ENCODE measurements at regions of chr17 and their contacts with region 1.

Region 1: DNA sequence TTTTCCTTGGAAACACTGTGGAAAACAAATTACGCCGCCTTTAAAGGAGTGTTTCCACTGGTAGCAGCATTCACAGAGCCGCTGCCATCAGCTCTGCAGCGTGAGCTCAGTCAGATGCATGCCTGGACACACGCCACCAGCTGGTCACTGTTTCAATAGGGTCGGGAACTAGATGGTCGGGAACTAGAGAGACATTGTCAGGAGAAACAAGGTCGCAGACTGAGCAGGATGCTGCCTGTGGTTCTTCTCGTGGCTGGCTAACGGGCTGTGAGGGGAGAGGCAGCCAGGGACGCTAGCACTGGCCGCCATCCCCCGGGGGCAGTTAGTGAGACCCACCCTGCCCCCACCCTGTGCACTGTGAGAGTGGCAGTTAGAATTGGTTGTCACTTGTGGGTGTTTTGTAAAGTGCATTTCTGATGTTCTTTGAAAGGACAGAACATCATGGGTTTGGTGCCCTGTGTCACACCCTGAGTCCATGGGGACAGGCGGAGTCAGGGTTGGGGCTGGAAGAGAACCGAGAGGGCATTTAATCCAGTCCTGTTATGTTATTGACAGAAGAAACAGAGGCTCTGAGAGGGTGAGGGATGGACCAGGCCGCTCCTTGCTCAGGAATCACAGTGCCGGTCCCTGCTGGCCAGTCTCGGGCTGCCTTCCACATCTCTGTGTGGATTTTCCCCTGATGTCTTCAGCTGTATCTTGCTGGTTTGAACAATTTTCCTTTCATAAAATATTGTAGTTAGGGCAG is 86.3 kb downstream of the SPECC1 start:
- DNase-seq: peak in 1 of 2 donors; percentile 89
- H3K4me3 ChIP-seq: peak overlapping the region in 1 of 2 donors; percentile 36
- H3K27ac ChIP-seq: peak overlapping the region; percentile 90 to 97
- H3K4me1 ChIP-seq: peaks cover 15 to 47% of the 10 kb centered on the region in 2 donors
- H3K27me3 ChIP-seq: no peaks in the 10 kb centered on the region
- CTCF ChIP-seq: peak in 2 of 3 experiments; percentile 34 to 40

Region 2: GRCh38 chr17:20009302-20010098 is 86.0 kb before region 1 on chr17 and contains the start of gene SPECC1:
- intact Hi-C with region 1: loop called (anchors 1 kb)
- DNase-seq: peak; percentile 50 to 93
- H3K4me3 ChIP-seq: peak within 1 kb of the TSS; percentile 74 to 85
- H3K27ac ChIP-seq: peak within 1 kb of the TSS; percentile 85 to 91
- H3K4me1 ChIP-seq: no peaks in the 10 kb centered on the region
- H3K27me3 ChIP-seq: no peaks in the 10 kb centered on the region
- CTCF ChIP-seq: peak in 1 of 3 experiments; percentile 99
- total RNA-seq, gene SPECC1: 76.4 TPM

Region 3: GRCh38 chr17:20028443-20028842 is 67.1 kb before region 1 on chr17:
- intact Hi-C with region 1: loop called (anchors 2 kb)
- DNase-seq: no peak
- H3K4me3 ChIP-seq: no peak overlapping the region
- H3K27ac ChIP-seq: peak overlapping the region in 1 of 2 donors; percentile 47
- H3K4me1 ChIP-seq: peaks cover 0 to 5% of the 10 kb centered on the region in 2 donors
- H3K27me3 ChIP-seq: no peaks in the 10 kb centered on the region
- CTCF ChIP-seq: no peak

Region 4: GRCh38 chr17:20063665-20064648 is 31.6 kb before region 1 on chr17:
- intact Hi-C with region 1: loop called (anchors 1 kb)
- DNase-seq: peak; percentile 66 to 96
- H3K4me3 ChIP-seq: peak overlapping the region in 1 of 2 donors; percentile 39
- H3K27ac ChIP-seq: peak overlapping the region; percentile 77 to 91
- H3K4me1 ChIP-seq: peaks cover 16 to 39% of the 10 kb centered on the region in 2 donors
- H3K27me3 ChIP-seq: no peaks in the 10 kb centered on the region
- CTCF ChIP-seq: no peak

Region 5: DNA sequence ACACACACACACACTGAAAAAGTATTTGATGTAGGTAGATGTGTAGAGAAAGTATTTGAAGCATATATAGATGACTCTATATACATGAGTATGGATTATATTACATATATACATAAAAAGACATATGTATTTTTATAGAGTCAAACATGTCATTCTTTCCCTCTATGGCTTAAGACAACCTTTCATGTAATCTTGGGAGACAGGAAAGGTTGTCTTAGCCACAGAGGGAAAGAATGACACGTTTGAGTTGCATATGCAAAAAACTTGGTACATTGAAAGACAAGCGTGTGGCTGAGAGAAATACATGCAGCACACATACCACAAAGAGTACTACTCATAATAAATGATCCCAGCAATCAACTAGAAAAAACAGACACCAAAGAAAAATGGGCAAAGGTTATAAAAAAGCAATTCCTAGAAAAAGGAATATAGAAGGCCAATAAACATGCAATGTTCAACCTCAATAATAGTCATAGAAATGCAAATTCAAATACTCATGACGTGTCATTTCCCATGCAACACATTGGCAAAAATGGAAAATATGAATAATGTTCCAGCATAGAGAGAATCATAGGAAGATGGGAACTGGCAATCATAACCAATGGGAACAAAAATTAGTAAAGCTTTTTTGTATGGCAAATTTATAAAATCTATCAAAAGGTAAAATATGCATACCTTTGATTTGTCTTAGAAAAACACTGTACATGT is 17.4 kb before region 1 on chr17:
- intact Hi-C with region 1: loop called (anchors 2 kb)
- DNase-seq: no peak
- H3K4me3 ChIP-seq: no peak overlapping the region
- H3K27ac ChIP-seq: peak overlapping the region in 1 of 2 donors; percentile 82
- H3K4me1 ChIP-seq: peaks cover 0 to 31% of the 10 kb centered on the region in 2 donors
- H3K27me3 ChIP-seq: no peaks in the 10 kb centered on the region
- CTCF ChIP-seq: no peak

Region 6: GRCh38 chr17:20111538-20111937 is 16.0 kb after region 1 on chr17:
- intact Hi-C with region 1: loop called (anchors 2 kb)
- DNase-seq: no peak
- H3K4me3 ChIP-seq: no peak overlapping the region
- H3K27ac ChIP-seq: no peak overlapping the region
- H3K4me1 ChIP-seq: no peaks in the 10 kb centered on the region
- H3K27me3 ChIP-seq: no peaks in the 10 kb centered on the region
- CTCF ChIP-seq: no peak

Region 7: DNA sequence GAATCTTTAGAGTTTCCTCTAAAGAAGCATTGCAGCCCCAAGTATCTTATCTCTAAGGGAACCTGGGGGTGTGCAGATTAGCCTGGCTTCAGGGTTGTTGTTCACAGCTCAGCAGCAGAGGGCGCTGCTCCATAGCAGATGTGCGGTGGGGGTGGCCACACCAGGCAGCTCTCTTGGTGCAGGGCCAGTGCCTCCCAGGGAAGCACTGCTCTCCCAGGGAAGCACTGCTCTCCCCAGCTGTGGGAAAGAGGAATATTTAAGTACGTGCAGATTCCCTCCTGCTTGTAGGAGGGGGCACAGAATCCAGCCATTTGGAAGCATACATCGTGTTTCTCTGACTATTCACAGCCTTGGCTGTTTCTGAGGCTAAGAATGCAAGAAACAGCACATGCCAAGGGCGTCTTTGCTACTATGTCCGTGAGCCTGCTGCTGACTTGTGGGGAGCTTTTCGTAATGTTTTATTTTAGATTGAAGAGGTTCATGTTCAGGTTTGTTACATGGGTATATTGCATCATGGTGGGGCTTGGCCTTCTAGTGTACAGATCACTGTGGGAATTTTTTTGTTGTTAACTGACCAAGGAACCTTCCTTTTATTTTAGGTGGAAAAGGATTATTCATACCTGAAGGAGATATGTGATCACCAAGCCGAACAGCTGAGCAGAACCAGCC is 131.4 kb after region 1 on chr17:
- intact Hi-C with region 1: no loop called
- DNase-seq: peak in 1 of 2 donors; percentile 90
- H3K4me3 ChIP-seq: peak overlapping the region in 1 of 2 donors; percentile 25
- H3K27ac ChIP-seq: peak overlapping the region; percentile 68 to 74
- H3K4me1 ChIP-seq: peaks cover 7 to 34% of the 10 kb centered on the region in 2 donors
- H3K27me3 ChIP-seq: no peaks in the 10 kb centered on the region
- CTCF ChIP-seq: peak; percentile 64 to 87 (median 79)